ENCODE measurements at regions of chr2 and their contacts with region 1.

Region 1: DNA sequence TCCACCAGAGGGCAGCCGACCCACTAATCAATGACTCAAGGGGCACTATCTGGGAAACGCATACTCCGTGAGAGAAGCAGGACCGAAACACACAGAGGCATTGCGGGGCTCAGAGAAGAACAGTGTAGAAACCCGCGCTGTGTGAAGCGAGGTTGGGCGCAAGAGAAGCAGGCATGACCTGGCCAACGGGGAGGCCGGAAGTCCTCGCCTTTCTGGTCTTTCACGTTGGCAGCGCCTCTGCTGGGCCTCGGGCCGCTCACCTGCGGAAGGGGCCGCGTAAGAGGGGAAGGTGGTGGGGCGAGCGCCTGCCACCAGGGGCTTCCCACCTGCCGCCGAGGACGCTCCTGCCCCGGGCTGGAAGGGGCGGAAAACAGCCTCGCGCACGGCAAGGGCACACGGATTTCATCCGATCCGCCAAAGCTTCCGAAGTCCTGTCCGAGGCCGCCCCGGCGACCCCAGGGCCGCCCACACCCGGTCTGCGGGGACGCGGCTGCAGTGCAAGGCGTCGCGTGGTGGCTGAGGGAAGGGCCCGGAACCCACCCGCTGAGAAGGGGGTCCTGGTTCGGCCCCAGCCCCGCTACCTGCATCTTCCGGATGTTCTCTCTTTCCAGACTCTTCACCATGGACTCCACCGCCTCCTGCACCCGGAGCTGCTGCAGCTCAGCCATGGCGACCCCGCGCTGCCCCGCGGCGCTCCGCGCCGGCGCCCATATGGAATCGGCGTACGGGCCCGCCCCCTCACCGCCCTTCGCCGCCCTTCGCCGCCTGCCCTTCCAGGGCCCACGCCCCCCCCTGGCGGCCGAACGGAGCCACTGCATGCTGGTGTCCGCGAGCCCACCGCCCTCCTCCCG is at the start of gene FAM136A:
- DNase-seq: peak; percentile 87
- H3K4me3 Mint-ChIP-seq: peak within 1 kb of the TSS; percentile 92
- H3K27ac Mint-ChIP-seq: peak within 1 kb of the TSS; percentile 95
- H3K4me1 Mint-ChIP-seq: peaks cover 46% of the 10 kb centered on the region
- H3K27me3 Mint-ChIP-seq: no peaks in the 10 kb centered on the region
- total RNA-seq, gene FAM136A: 33.4 to 37.4 TPM

Region 2: GRCh38 chr2:70283500-70284191 is 17.9 kb before region 1 on chr2:
- CTCF ChIA-PET with region 1: interaction called, 13 read pairs
- POLR2A ChIA-PET with region 1: no interaction called
- DNase-seq: no peak
- H3K4me3 Mint-ChIP-seq: no peak overlapping the region
- H3K27ac Mint-ChIP-seq: no peak overlapping the region
- H3K4me1 Mint-ChIP-seq: peaks cover 40% of the 10 kb centered on the region
- H3K27me3 Mint-ChIP-seq: no peaks in the 10 kb centered on the region

Region 3: GRCh38 chr2:70391988-70392387 is 90.4 kb after region 1 on chr2:
- CTCF ChIA-PET with region 1: no interaction called
- POLR2A ChIA-PET with region 1: no interaction called
- DNase-seq: no peak
- H3K4me3 Mint-ChIP-seq: no peak overlapping the region
- H3K27ac Mint-ChIP-seq: no peak overlapping the region
- H3K4me1 Mint-ChIP-seq: no peaks in the 10 kb centered on the region
- H3K27me3 Mint-ChIP-seq: peaks cover 12% of the 10 kb centered on the region

Region 4: GRCh38 chr2:70643715-70644114 is 342.1 kb after region 1 on chr2:
- CTCF ChIA-PET with region 1: interaction called, 19 read pairs
- POLR2A ChIA-PET with region 1: no interaction called
- DNase-seq: peak; percentile 25
- H3K4me3 Mint-ChIP-seq: no peak overlapping the region
- H3K27ac Mint-ChIP-seq: no peak overlapping the region
- H3K4me1 Mint-ChIP-seq: peaks cover 17% of the 10 kb centered on the region
- H3K27me3 Mint-ChIP-seq: peaks cover 2% of the 10 kb centered on the region